ENCODE measurements at regions of chr11 and their contacts with region 1.

Region 1: DNA sequence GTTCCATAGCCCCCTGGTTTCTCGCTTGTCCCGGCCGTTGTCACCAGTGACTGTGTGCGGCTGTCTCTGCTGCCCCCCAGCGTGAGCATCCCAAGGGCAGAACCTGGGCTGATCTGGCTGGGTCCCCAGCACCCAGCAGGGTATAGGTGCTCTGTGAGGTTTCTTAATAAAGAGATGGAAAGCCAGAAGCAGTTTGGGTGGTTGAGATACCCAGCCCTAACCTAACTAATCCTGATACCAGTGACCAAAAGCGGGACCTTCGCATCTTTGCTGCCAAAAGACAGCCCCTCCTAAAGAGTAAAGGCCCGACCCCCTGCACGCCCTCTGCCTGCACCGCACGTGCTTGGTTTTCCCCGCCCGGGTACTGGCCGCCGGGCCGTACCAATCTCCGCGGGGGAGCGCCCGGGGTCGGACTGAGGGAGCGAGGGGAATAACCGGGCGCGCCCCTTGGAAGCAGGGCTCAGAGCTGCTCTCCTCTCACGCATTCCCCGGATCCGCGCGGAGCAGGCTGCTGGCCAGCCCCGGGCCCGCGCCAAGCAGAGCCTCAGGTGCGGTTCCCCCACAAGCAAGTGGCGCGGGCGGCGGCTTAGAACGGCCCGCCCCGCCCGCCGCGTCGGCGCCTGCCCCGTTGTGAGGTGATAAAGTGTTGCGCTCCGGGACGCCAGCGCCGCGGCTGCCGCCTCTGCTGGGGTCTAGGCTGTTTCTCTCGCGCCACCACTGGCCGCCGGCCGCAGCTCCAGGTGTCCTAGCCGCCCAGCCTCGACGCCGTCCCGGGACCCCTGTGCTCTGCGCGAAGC is at the start of gene DGAT2:
- DNase-seq: peak; percentile 82
- ATAC-seq: peak; percentile 86
- H3K4me3 Mint-ChIP-seq: peak within 1 kb of the TSS; percentile 61
- H3K27ac Mint-ChIP-seq: peak within 1 kb of the TSS; percentile 48
- H3K4me1 Mint-ChIP-seq: peaks cover 30% of the 10 kb centered on the region
- H3K27me3 Mint-ChIP-seq: peaks cover 28% of the 10 kb centered on the region
- total RNA-seq, gene DGAT2: 1.4 to 1.5 TPM

Region 2: GRCh38 chr11:75721855-75722668 is 46.2 kb before region 1 on chr11:
- CTCF ChIA-PET with region 1: no interaction called
- POLR2A ChIA-PET with region 1: no interaction called
- intact Hi-C with region 1: loop called in 1 of 2 experiments (anchors 5 kb)
- DNase-seq: no peak
- ATAC-seq: no peak
- H3K4me3 Mint-ChIP-seq: no peak overlapping the region
- H3K27ac Mint-ChIP-seq: no peak overlapping the region
- H3K4me1 Mint-ChIP-seq: no peaks in the 10 kb centered on the region
- H3K27me3 Mint-ChIP-seq: no peaks in the 10 kb centered on the region